ENCODE measurements at regions of chr21 and their contacts with region 1.

Region 1: GRCh38 chr21:30900881-30901280 is 19.5 kb upstream of the KRTAP11-1 start:
- DNase-seq: no peak
- ATAC-seq: no peak
- H3K4me3 ChIP-seq: no peak overlapping the region
- H3K27ac ChIP-seq: no peak overlapping the region
- H3K4me1 ChIP-seq: no peaks in the 10 kb centered on the region
- H3K27me3 ChIP-seq: no peaks in the 10 kb centered on the region

Region 2: DNA sequence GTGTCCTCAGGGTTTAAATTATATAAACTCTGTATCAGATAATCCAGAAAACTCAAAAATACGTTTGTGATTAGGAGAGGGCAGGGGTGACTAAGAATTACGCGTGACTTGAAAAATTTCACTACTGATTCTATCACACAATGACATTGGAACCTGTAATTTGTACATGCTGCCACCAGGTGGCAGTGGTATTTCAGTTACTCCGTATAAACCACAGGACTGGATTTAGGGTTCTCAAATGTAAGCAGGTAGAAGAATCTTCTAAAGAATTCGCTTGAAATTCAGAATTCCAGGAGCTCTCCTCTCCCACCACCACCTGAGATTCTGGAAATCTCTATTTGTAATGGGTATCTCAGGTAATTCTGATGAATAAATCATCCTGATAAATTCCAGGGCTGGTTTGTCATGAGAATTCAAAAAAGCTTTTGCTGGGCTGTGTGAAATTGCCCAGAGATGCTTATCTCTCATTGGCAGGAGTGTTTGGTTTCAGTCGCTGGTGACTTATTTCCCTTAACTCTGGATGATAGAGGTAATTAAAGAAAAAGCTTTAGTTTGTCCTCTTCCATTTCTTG is 69.6 kb before region 1 on chr21:
- intact Hi-C with region 1: loop called in 1 of 2 experiments (anchors 10 kb)
- DNase-seq: no peak
- ATAC-seq: no peak
- H3K4me3 ChIP-seq: no peak overlapping the region
- H3K27ac ChIP-seq: no peak overlapping the region
- H3K4me1 ChIP-seq: no peaks in the 10 kb centered on the region
- H3K27me3 ChIP-seq: no peaks in the 10 kb centered on the region